ENCODE measurements at regions of chr22 and their contacts with region 1.

Region 1: GRCh38 chr22:23591201-23591791 is 11.2 kb upstream of the IGLL1 start:
- DNase-seq: peak; percentile 84
- H3K4me3 ChIP-seq: peak overlapping the region in 1 of 2 experiments; percentile 29; a peak in 1 of 4 replicates
- H3K27ac ChIP-seq: no peak overlapping the region
- H3K4me1 ChIP-seq: no peaks in the 10 kb centered on the region
- H3K27me3 ChIP-seq: no peaks in the 10 kb centered on the region
- CTCF ChIP-seq: peak; percentile 90
- EP300 ChIP-seq: no peak
- RAD21 ChIP-seq: peak; percentile 94

Region 2: GRCh38 chr22:23527971-23528740 is 63.1 kb before region 1 on chr22:
- CTCF ChIA-PET with region 1: interaction called, 10 read pairs
- POLR2A ChIA-PET with region 1: no interaction called
- DNase-seq: no peak
- H3K4me3 ChIP-seq: no peak overlapping the region
- H3K27ac ChIP-seq: no peak overlapping the region
- H3K4me1 ChIP-seq: peaks cover 0 to 23% of the 10 kb centered on the region in 2 experiments; a peak in 1 of 4 replicates
- H3K27me3 ChIP-seq: no peaks in the 10 kb centered on the region
- CTCF ChIP-seq: no peak
- EP300 ChIP-seq: no peak
- RAD21 ChIP-seq: no peak

Region 3: GRCh38 chr22:23539135-23539838 is 52.0 kb before region 1 on chr22:
- CTCF ChIA-PET with region 1: interaction called, 49 read pairs
- POLR2A ChIA-PET with region 1: no interaction called
- DNase-seq: peak; percentile 71
- H3K4me3 ChIP-seq: peak overlapping the region in 1 of 2 experiments; percentile 41; a peak in 1 of 4 replicates
- H3K27ac ChIP-seq: peak overlapping the region in 1 of 2 experiments; percentile 47; a peak in 1 of 4 replicates
- H3K4me1 ChIP-seq: peaks cover 5 to 14% of the 10 kb centered on the region in 2 experiments; a peak in 3 of 4 replicates
- H3K27me3 ChIP-seq: no peaks in the 10 kb centered on the region
- CTCF ChIP-seq: peak; percentile 95
- EP300 ChIP-seq: no peak
- RAD21 ChIP-seq: peak; percentile 87

Region 4: GRCh38 chr22:23550049-23550650 is 41.1 kb before region 1 on chr22:
- CTCF ChIA-PET with region 1: no interaction called
- POLR2A ChIA-PET with region 1: no interaction called
- DNase-seq: no peak
- H3K4me3 ChIP-seq: no peak overlapping the region
- H3K27ac ChIP-seq: no peak overlapping the region
- H3K4me1 ChIP-seq: no peaks in the 10 kb centered on the region
- H3K27me3 ChIP-seq: no peaks in the 10 kb centered on the region
- CTCF ChIP-seq: no peak
- EP300 ChIP-seq: no peak
- RAD21 ChIP-seq: no peak

Region 5: GRCh38 chr22:23566705-23567475 is 24.4 kb before region 1 on chr22:
- CTCF ChIA-PET with region 1: interaction called, 13 read pairs
- POLR2A ChIA-PET with region 1: no interaction called
- DNase-seq: no peak
- H3K4me3 ChIP-seq: peak overlapping the region in 1 of 2 experiments; percentile 42; a peak in 2 of 4 replicates
- H3K27ac ChIP-seq: no peak overlapping the region
- H3K4me1 ChIP-seq: peaks cover 0 to 8% of the 10 kb centered on the region in 2 experiments; a peak in 1 of 4 replicates
- H3K27me3 ChIP-seq: peaks cover 18% of the 10 kb centered on the region
- CTCF ChIP-seq: no peak
- EP300 ChIP-seq: no peak
- RAD21 ChIP-seq: no peak

Region 6: GRCh38 chr22:23580576-23581259 is 10.6 kb before region 1 on chr22:
- CTCF ChIA-PET with region 1: interaction called, 38 read pairs
- POLR2A ChIA-PET with region 1: no interaction called
- DNase-seq: no peak
- H3K4me3 ChIP-seq: no peak overlapping the region
- H3K27ac ChIP-seq: no peak overlapping the region
- H3K4me1 ChIP-seq: no peaks in the 10 kb centered on the region
- H3K27me3 ChIP-seq: 0 out of 2 replicates have a peak, but pooled peaks cover 6% of the 10 kb centered on the region
- CTCF ChIP-seq: no peak
- EP300 ChIP-seq: no peak
- RAD21 ChIP-seq: no peak

Region 7: DNA sequence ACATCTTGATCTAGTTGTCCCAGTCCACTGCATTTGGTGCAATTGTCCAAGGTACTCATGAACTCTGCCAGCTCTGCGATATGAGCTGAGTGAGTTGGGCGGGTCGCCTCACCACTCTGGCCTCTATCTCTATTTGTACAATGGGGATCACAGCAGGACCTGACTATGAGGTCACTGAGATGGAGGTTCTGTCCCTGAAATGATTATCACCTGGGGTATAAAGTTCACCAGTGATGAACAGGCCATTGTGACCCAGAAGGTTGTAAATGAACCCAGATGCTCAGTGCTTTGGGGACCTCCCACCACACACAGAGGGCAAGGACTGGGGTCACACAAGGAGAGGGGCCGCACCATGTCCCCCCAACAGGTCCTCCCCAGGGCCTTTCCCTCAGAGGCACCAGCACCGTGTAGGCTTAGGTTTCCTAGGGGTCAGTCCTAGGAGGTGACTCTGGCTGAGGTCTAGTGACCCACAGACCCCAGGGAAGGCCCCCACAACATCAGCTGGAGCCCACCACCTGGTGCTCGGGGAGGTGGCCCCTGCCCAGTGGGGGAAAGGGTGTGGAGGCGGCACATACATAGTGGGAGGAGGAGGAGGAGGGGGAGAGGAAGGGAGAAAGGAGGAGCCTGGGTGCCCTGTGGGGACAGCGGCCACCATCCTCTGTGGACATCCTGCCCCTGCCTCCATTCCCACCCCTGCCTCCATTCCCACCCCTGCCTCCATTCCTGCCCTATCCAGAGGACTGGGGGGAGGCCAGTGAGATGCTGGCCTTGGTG is 13.8 kb after region 1 on chr22:
- CTCF ChIA-PET with region 1: interaction called, 10 read pairs
- POLR2A ChIA-PET with region 1: no interaction called
- DNase-seq: no peak
- H3K4me3 ChIP-seq: no peak overlapping the region
- H3K27ac ChIP-seq: no peak overlapping the region
- H3K4me1 ChIP-seq: peaks cover 0 to 3% of the 10 kb centered on the region in 2 experiments; a peak in 1 of 4 replicates
- H3K27me3 ChIP-seq: no peaks in the 10 kb centered on the region
- CTCF ChIP-seq: no peak
- EP300 ChIP-seq: no peak
- RAD21 ChIP-seq: no peak